ENCODE measurements at regions of chr6 and their contacts with region 1.

Region 1: DNA sequence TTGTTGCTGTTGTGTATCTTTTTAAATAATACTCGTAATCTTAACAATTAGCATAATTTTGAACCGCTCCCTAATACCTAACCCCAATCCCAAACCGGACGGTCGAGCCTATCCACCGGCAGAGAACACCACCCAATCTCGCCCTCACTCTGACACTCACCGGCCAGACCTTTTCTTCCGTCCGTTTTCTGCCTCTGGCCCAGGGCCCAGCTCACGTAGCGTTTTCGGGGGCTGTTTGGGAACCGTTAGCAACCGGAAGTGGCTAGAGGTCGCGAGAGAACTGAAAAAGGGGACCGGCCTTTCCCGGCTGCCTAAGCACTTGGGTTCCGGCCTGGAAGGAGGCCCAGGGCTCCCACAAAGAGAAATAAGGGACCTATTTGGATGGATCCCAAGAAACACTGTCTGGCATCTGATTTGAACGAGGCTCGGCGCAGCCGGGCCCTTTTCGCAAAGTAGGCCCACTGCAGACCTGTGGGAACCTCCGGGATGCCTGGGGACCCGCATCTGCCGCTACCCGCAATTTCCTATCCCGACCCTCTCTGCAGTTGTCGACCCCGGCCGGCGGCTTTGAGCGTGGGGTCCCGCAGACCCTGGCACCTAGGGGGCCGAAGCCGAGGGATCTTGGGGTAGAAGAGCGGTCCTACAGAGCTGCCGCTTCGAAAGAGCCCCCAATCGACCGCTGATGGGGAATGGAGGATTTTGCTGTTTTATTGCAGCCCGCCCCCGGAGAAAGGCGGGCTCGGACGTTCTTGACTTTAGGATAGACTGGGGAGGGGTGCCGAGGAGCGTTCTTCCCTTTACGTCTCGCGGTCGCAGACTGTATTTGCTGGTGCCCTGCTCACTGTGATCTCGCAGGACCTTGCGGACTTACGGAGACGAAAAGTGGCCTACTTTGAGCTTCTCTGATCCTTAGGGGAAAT is 4.8 kb upstream of the ZKSCAN8 start:
- DNase-seq: peak; percentile 78 to 91
- ATAC-seq: peak; percentile 90 to 93
- H3K4me3 ChIP-seq: peak overlapping the region; percentile 81 to 99 (median 98)
- H3K27ac ChIP-seq: peak overlapping the region; percentile 90 to 97 (median 92)
- H3K4me1 ChIP-seq: peaks cover 17 to 21% of the 10 kb centered on the region in 2 donors
- H3K27me3 ChIP-seq: no peaks in the 10 kb centered on the region
- CTCF ChIP-seq: no peak
- POLR2A ChIP-seq: peak in 1 of 2 donors; percentile 31

Region 2: DNA sequence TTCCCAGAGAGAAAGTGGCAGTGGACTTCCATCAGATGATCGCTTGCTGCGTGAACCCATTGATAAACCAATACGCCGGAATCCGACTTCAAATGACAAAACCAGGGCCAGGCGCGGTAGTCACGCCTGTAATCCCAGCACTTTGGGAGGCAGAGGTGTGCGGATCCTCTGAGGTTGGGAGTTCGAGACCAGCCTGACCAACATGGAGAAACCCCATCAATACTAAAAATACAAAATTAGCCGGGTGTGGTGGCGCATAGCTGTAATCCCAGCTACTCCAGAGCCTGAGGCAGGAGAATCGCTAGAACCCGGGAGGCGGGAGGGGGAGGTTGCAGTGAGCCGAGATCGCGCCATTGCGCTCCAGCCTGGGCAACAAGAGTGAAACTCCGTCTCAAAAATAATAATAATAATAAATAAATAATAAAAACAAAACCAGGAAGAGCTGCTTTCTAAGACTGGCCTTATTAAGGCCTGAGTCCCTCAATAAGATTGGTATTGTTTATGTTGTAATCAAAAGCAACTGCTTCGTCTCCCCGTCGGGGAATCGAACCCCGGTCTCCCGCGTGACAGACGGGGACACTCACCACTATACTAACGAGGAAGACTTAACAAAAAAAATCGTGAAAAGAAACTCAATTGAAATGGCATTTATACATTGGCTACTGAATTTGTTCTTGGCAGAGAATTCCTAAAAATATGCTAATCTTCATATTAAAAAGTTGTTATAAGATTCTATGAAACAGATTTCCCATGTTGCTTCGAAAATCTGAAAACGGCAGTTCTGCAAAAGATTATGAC is 553.7 kb before region 1 on chr6:
- in situ Hi-C with region 1: no loop called
- intact Hi-C with region 1: no loop called
- DNase-seq: no peak
- ATAC-seq: no peak
- H3K4me3 ChIP-seq: no peak overlapping the region
- H3K27ac ChIP-seq: no peak overlapping the region
- H3K4me1 ChIP-seq: no peaks in the 10 kb centered on the region
- H3K27me3 ChIP-seq: peaks cover 14 to 37% (median 21%) of the 10 kb centered on the region in 3 donors
- CTCF ChIP-seq: no peak
- POLR2A ChIP-seq: no peak

Region 3: GRCh38 chr6:28080631-28081485 is 56.0 kb before region 1 on chr6:
- in situ Hi-C with region 1: loop called in 1 of 4 experiments (anchors 10 kb)
- intact Hi-C with region 1: loop called (anchors 2 kb)
- DNase-seq: peak; percentile 90 to 93
- ATAC-seq: peak; percentile 100
- H3K4me3 ChIP-seq: peak overlapping the region; percentile 72 to 92 (median 85)
- H3K27ac ChIP-seq: peak overlapping the region; percentile 84 to 90 (median 87)
- H3K4me1 ChIP-seq: peaks cover 10 to 11% of the 10 kb centered on the region in 2 donors
- H3K27me3 ChIP-seq: no peaks in the 10 kb centered on the region
- CTCF ChIP-seq: no peak
- POLR2A ChIP-seq: no peak

Region 4: DNA sequence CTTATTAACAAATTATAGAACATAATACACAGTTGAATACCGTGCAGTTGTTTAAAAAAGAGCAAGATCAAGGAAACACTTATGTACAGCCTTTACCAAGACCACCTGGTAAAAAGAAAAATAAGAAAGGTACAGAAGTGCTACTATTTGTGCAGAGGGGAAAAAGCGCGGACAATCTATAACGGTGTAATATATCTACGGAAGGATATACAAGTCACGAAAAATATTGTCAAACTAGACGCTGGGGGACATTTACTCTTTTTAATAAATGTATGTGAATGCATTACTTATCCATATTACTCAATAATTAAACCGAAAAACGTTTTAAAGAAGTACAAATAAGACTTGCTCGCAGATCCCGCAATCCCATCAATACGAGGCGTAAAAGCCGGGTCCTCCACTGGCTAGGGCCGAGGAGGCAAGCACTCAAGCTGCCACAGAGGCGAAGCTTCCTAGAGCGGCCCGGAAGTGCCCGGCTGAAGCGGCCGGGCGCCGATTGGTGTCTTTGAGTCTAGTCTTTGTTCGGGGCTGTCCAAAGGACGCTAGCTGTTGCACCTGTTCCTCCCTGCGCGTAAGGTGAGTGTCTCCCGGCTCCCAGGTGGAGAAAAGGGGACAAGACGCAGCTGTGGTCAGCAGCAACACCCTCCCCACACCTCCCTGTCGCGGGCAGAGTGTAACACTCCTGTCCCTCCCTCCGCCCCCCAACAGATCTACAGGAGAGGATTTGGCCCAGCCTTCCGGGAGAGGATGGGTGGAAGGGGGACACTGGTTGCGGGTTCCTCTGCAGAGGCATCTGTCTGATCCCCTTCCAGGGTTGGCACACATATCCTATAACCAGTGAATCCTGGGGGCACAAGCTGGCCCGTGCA is 12.5 kb before region 1 on chr6 and contains the start of gene ZSCAN16:
- in situ Hi-C with region 1: no loop called
- intact Hi-C with region 1: loop called (anchors 2 kb)
- DNase-seq: peak; percentile 65 to 79
- ATAC-seq: peak; percentile 98 to 99
- H3K4me3 ChIP-seq: peak within 1 kb of the TSS; percentile 72 to 83 (median 77)
- H3K27ac ChIP-seq: peak within 1 kb of the TSS; percentile 71 to 81 (median 77)
- H3K4me1 ChIP-seq: peaks cover 13 to 14% of the 10 kb centered on the region in 2 donors
- H3K27me3 ChIP-seq: no peaks in the 10 kb centered on the region
- CTCF ChIP-seq: no peak
- POLR2A ChIP-seq: no peak
- total RNA-seq, gene ZSCAN16: 1.8 to 4.2 (median 3.4) TPM

Region 5: GRCh38 chr6:28225056-28225834 is 88.4 kb after region 1 on chr6 and contains the start of gene ZSCAN9:
- in situ Hi-C with region 1: no loop called
- intact Hi-C with region 1: loop called (anchors 2 kb)
- DNase-seq: peak; percentile 75 to 83
- ATAC-seq: peak; percentile 93 to 99
- H3K4me3 ChIP-seq: peak within 1 kb of the TSS; percentile 66 to 88 (median 86)
- H3K27ac ChIP-seq: peak within 1 kb of the TSS; percentile 63 to 80 (median 71)
- H3K4me1 ChIP-seq: peaks cover 13 to 16% of the 10 kb centered on the region in 2 donors
- H3K27me3 ChIP-seq: peaks cover 0 to 12% (median 6%) of the 10 kb centered on the region in 3 donors
- CTCF ChIP-seq: no peak
- POLR2A ChIP-seq: no peak
- total RNA-seq, gene ZSCAN9: 3.7 to 6.5 (median 4.3) TPM

Region 6: DNA sequence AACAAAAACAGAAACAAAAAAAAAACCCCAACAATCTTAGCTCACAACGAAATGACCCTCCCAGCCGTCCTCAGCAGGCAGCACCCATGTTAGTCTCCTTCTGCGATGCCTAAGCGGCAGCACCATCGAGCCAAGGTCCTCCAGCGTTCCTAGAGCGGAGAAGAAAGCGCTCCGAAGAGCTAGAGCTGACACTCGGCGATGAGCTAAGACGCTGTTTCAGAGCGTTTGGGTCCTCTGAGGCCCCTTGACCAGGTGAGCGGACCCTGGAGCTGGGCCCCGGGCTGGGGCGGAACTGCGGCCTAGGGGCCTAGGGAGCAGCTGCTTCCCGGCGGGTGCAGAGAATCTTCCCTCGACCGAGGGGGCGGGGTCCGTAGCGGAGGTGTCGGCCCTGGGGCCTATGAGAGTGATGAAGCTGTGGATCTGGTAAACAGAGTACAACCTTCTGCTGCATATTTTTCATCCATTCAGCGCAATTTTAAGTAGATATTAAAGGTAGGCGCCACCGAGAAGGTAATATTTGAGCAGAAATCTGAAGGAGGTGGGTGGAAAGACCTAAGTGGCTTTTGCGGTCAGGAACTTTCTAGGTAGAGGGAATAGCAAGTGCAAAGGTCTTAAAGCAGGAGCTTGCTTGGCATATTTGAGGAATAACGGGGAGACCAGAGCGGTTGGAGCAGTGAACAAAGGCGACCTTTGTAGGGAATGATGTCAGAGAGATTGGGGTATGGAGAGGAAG is 130.3 kb after region 1 on chr6 and contains the start of gene ZSCAN26:
- in situ Hi-C with region 1: loop called in 2 of 4 experiments (anchors 10 to 25 kb)
- intact Hi-C with region 1: loop called (anchors 5 kb)
- DNase-seq: peak; percentile 64 to 71
- ATAC-seq: peak; percentile 97 to 99
- H3K4me3 ChIP-seq: peak within 1 kb of the TSS; percentile 70 to 98 (median 92)
- H3K27ac ChIP-seq: peak within 1 kb of the TSS; percentile 76 to 81 (median 80)
- H3K4me1 ChIP-seq: peaks cover 15 to 27% of the 10 kb centered on the region in 2 donors
- H3K27me3 ChIP-seq: no peaks in the 10 kb centered on the region
- CTCF ChIP-seq: no peak
- POLR2A ChIP-seq: peak in 1 of 2 donors; percentile 22
- total RNA-seq, gene ZSCAN26: 7.3 to 13.4 (median 9.8) TPM

Measured in gastrocnemius medialis (tissue), 4 donors.